AG04450 (cell line): ENCODE measurements at regions of chr6 and their contacts with region 1.

Region 1: GRCh38 chr6:122839477-122839876 is 50.4 kb downstream of the SMPDL3A start:
- DNase-seq: no peak
- H3K4me3 ChIP-seq: no peak overlapping the region
- H3K27ac ChIP-seq: no peak overlapping the region
- H3K27me3 ChIP-seq: peaks cover 3% of the 10 kb centered on the region
- CTCF ChIP-seq: peak; percentile 75

Region 2: DNA sequence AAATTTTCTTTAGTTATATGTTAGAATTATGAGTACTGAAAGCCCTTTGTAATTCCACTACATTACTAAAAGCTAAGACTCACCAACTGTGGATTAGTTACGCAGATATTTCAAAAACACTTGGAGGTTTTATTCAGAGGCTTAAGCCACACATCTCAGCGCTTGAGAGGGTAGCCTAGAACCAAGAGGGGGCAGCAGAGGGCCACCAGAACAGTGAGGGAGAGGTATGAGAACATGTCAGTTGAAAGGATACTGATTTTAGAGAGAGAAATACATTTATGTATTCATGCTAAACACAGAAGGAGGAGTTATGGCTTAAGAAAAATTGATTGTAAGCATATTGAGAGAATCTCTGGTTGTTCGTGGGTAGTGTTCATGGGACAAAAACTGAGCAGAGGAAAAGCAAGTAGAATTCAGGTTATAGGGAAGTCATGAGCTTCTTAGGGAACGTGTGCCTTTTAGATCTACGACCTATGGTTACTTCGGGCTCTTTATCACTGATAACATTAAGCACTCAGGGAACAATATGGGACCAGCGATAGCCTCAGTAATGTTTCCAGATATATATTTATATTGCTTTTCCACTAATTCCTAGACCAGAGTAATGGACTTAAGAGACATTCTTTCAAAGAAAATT is 347.4 kb before region 1 on chr6:
- CTCF ChIA-PET with region 1: interaction called, 32 read pairs
- POLR2A ChIA-PET with region 1: no interaction called
- DNase-seq: peak; percentile 36
- H3K4me3 ChIP-seq: no peak overlapping the region
- H3K27ac ChIP-seq: no peak overlapping the region
- H3K27me3 ChIP-seq: no peaks in the 10 kb centered on the region
- CTCF ChIP-seq: peak; percentile 98

Region 3: GRCh38 chr6:122722746-122723145 is 116.7 kb before region 1 on chr6:
- CTCF ChIA-PET with region 1: interaction called, 406 read pairs
- POLR2A ChIA-PET with region 1: no interaction called
- DNase-seq: no peak
- H3K4me3 ChIP-seq: no peak overlapping the region
- H3K27ac ChIP-seq: no peak overlapping the region
- H3K27me3 ChIP-seq: no peaks in the 10 kb centered on the region
- CTCF ChIP-seq: no peak

Region 4: DNA sequence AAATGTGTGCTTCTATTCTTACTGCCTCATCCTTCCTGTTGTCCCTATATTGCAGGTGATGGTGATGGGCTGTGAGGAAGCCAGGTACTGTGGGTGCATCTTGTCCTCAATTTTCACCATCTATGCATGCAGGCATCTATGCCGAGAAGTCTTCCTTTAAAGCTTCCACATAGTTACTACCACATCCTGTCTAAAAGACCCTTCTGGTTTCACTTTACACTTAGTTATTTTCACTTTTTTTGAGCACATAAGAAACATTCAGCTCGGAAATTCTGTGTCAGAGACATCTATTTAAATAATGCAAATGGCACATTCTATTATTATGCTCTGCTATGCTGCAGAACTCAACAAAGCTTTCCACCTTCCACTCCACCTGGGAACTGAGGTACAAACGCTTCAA is 88.2 kb before region 1 on chr6:
- CTCF ChIA-PET with region 1: interaction called, 68 read pairs
- POLR2A ChIA-PET with region 1: no interaction called
- DNase-seq: no peak
- H3K4me3 ChIP-seq: no peak overlapping the region
- H3K27ac ChIP-seq: no peak overlapping the region
- H3K27me3 ChIP-seq: peaks cover 2% of the 10 kb centered on the region
- CTCF ChIP-seq: no peak

Region 5: GRCh38 chr6:122789182-122790027 is 50.1 kb before region 1 on chr6 and contains the start of gene SMPDL3A:
- CTCF ChIA-PET with region 1: interaction called, 14 read pairs
- POLR2A ChIA-PET with region 1: interaction called, 9 read pairs
- DNase-seq: peak; percentile 92
- H3K4me3 ChIP-seq: peak within 1 kb of the TSS; percentile 91
- H3K27ac ChIP-seq: peak within 1 kb of the TSS; percentile 96
- H3K27me3 ChIP-seq: no peaks in the 10 kb centered on the region
- CTCF ChIP-seq: peak; percentile 43; the same call in 1 of the 2 replicates
- polyA plus RNA-seq, gene SMPDL3A: 84.4 and 105 TPM in 2 replicates

Region 6: DNA sequence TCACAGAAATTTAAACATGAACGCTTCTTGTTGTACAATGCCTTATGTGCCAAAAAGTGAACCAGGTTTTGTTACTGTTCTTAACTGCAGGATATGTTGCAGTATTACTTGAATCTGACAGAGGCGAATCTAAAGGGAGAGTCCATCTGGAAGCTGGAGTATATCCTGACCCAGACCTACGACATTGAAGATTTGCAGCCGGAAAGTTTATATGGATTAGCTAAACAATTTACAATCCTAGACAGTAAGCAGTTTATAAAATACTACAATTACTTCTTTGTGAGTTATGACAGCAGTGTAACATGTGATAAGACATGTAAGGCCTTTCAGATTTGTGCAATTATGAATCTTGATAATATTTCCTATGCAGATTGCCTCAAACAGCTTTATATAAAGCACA is 30.5 kb before region 1 on chr6:
- CTCF ChIA-PET with region 1: interaction called, 16 read pairs
- POLR2A ChIA-PET with region 1: no interaction called
- DNase-seq: no peak
- H3K4me3 ChIP-seq: no peak overlapping the region
- H3K27ac ChIP-seq: no peak overlapping the region
- H3K27me3 ChIP-seq: no peaks in the 10 kb centered on the region
- CTCF ChIP-seq: no peak